ENCODE measurements at regions of chr6 and their contacts with region 1.

Region 1: GRCh38 chr6:31143148-31143547 is 4.3 kb upstream of the PSORS1C2 start:
- DNase-seq: peak; percentile 46
- H3K4me3 ChIP-seq: no peak overlapping the region
- H3K27ac ChIP-seq: peak overlapping the region in 1 of 2 donors; percentile 15
- H3K4me1 ChIP-seq: no peaks in the 10 kb centered on the region
- H3K27me3 ChIP-seq: no peaks in the 10 kb centered on the region
- CTCF ChIP-seq: no peak
- POLR2A ChIP-seq: no peak

Region 2: GRCh38 chr6:31197559-31198305 is 54.6 kb after region 1 on chr6:
- intact Hi-C with region 1: loop called (anchors 5 kb)
- DNase-seq: peak; percentile 93
- H3K4me3 ChIP-seq: peak overlapping the region; percentile 59 to 85
- H3K27ac ChIP-seq: peak overlapping the region; percentile 92 to 96
- H3K4me1 ChIP-seq: no peaks in the 10 kb centered on the region
- H3K27me3 ChIP-seq: no peaks in the 10 kb centered on the region
- CTCF ChIP-seq: no peak
- POLR2A ChIP-seq: peak; percentile 34